Activated T-helper 1 cell treated with anti-CD3 and anti-CD28 coated beads, Interleukin-12 subunit alpha, Interleukin-12 subunit beta, Interleukin-2, Interleukin-4 antibody, amounts not matched to agents 30 ng/mL and 10 ng/mL and 1 ng/mL, durations not matched to agents 14 hours and 24 hours and 36 hours (primary cell): ENCODE measurements at regions of chr5 and their contacts with region 1.

Region 1: DNA sequence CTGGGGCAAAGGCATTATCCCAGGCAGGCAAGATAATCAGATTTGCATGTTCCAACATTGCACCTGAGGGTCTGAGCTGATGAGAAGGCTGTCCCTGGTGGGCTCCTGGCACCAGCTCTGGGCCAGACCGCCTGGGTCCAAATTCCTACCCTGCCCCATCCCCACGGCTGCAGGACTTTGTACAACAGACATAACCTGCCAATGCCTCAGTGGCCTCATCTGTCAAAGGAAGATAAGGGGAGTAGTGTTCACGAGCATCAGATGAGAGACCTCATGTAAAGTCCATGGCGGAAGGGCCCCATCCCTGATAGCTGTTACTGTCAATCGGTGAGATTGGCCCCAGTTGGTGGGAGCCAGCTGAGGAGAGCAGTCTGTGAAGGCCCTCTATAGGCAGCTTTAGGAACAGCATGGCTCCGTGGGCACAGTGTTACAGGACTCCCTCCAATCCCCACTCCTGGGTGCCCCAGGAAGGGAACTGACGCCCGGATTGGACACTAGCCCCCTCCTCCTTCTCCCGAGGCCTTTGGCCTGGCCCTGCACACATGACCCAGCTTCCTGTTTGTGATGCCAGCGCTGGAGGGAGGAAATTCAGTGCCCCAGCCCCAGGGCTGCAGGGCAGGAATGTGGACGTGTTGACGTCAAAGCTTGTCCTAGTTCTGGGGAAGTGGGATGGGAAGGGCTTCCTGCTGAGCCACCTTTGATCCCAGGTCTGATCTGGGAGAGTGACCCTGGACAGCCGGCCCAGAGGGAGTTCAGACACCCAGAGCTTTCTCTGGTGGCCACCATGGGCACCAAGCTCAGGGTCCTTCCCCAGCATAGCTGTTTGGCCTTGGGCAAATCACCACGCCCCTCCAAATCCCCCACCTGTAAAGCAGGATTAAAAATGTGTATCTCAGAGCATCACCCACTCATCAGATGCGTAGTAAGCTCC is 56.2 kb downstream of the DUSP1 start:
- DNase-seq: peak; percentile 45
- H3K4me3 Mint-ChIP-seq: no peak overlapping the region
- H3K27ac Mint-ChIP-seq: no peak overlapping the region
- H3K4me1 Mint-ChIP-seq: no peaks in the 10 kb centered on the region
- H3K27me3 Mint-ChIP-seq: peaks cover 7% of the 10 kb centered on the region

Region 2: GRCh38 chr5:172770675-172771438 is 56.1 kb after region 1 on chr5 and contains the start of gene DUSP1:
- intact Hi-C with region 1: loop called (anchors 1 kb)
- DNase-seq: peak; percentile 93
- H3K4me3 Mint-ChIP-seq: peak within 1 kb of the TSS; percentile 88
- H3K27ac Mint-ChIP-seq: peak within 1 kb of the TSS; percentile 98
- H3K4me1 Mint-ChIP-seq: peaks cover 61% of the 10 kb centered on the region
- H3K27me3 Mint-ChIP-seq: no peaks in the 10 kb centered on the region
- total RNA-seq, gene DUSP1: 11.9 and 12.5 TPM in 2 replicates

Region 3: GRCh38 chr5:172833686-172834414 is 119.1 kb after region 1 on chr5 and contains the start of gene ERGIC1:
- intact Hi-C with region 1: loop called (anchors 5 kb)
- DNase-seq: peak; percentile 79
- H3K4me3 Mint-ChIP-seq: peak within 1 kb of the TSS; percentile 88
- H3K27ac Mint-ChIP-seq: peak within 1 kb of the TSS; percentile 85
- H3K4me1 Mint-ChIP-seq: peaks cover 19% of the 10 kb centered on the region
- H3K27me3 Mint-ChIP-seq: no peaks in the 10 kb centered on the region
- total RNA-seq, gene ERGIC1: 47.4 and 47.9 TPM in 2 replicates

Region 4: GRCh38 chr5:172910828-172911627 is 196.3 kb after region 1 on chr5:
- intact Hi-C with region 1: loop called (anchors 1 kb)
- DNase-seq: no peak
- H3K4me3 Mint-ChIP-seq: no peak overlapping the region
- H3K27ac Mint-ChIP-seq: no peak overlapping the region
- H3K4me1 Mint-ChIP-seq: no peaks in the 10 kb centered on the region
- H3K27me3 Mint-ChIP-seq: no peaks in the 10 kb centered on the region

Region 5: DNA sequence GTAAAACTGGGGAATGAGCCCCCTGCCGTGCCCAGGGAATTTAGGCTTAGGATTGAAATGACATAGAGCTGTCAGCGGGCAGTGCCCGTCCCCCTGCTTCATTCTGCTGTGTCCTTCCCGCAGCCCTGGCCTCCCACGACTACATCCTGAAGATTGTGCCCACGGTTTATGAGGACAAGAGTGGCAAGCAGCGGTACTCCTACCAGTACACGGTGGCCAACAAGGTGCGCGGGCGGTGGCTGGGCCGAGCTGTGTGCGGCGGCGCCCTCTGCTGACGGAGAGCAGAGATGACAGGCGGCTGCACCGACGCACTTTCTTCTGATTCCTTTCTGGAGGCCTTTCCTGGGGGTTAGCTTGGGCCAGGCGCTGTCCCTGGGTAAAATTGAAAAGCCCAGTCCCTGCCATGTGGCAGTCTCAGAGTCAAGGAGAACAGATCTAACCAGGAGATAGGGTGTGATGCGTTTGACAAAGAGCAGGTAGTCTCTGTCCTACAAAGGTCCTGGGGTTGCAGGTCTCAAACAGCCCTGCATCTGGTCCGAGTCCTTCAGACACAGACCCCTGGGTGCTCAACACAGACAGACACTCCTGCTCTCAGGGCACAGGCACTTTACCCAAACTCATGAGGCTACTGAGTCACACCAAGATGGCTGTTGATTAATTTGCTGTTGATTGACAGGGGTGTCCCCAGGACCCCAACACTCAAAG is 217.7 kb after region 1 on chr5:
- intact Hi-C with region 1: loop called (anchors 1 kb)
- DNase-seq: peak; percentile 50
- H3K4me3 Mint-ChIP-seq: no peak overlapping the region
- H3K27ac Mint-ChIP-seq: peak overlapping the region; percentile 7
- H3K4me1 Mint-ChIP-seq: peaks cover 8% of the 10 kb centered on the region
- H3K27me3 Mint-ChIP-seq: no peaks in the 10 kb centered on the region

Region 6: GRCh38 chr5:173204185-173204979 is 489.6 kb after region 1 on chr5:
- intact Hi-C with region 1: loop called (anchors 5 kb)
- DNase-seq: no peak
- H3K4me3 Mint-ChIP-seq: no peak overlapping the region
- H3K27ac Mint-ChIP-seq: no peak overlapping the region
- H3K4me1 Mint-ChIP-seq: no peaks in the 10 kb centered on the region
- H3K27me3 Mint-ChIP-seq: peaks cover 21% of the 10 kb centered on the region

Region 7: GRCh38 chr5:173441053-173441628 is 726.4 kb after region 1 on chr5:
- intact Hi-C with region 1: no loop called
- DNase-seq: no peak
- H3K4me3 Mint-ChIP-seq: no peak overlapping the region
- H3K27ac Mint-ChIP-seq: no peak overlapping the region
- H3K4me1 Mint-ChIP-seq: no peaks in the 10 kb centered on the region
- H3K27me3 Mint-ChIP-seq: peaks cover 4% of the 10 kb centered on the region

Region 8: GRCh38 chr5:174505621-174506020 is 1790.9 kb after region 1 on chr5:
- intact Hi-C with region 1: no loop called
- DNase-seq: no peak
- H3K4me3 Mint-ChIP-seq: no peak overlapping the region
- H3K27ac Mint-ChIP-seq: no peak overlapping the region
- H3K4me1 Mint-ChIP-seq: no peaks in the 10 kb centered on the region
- H3K27me3 Mint-ChIP-seq: no peaks in the 10 kb centered on the region